H1 (cell line): ENCODE measurements at regions of chr3 and their contacts with region 1.

Region 1: DNA sequence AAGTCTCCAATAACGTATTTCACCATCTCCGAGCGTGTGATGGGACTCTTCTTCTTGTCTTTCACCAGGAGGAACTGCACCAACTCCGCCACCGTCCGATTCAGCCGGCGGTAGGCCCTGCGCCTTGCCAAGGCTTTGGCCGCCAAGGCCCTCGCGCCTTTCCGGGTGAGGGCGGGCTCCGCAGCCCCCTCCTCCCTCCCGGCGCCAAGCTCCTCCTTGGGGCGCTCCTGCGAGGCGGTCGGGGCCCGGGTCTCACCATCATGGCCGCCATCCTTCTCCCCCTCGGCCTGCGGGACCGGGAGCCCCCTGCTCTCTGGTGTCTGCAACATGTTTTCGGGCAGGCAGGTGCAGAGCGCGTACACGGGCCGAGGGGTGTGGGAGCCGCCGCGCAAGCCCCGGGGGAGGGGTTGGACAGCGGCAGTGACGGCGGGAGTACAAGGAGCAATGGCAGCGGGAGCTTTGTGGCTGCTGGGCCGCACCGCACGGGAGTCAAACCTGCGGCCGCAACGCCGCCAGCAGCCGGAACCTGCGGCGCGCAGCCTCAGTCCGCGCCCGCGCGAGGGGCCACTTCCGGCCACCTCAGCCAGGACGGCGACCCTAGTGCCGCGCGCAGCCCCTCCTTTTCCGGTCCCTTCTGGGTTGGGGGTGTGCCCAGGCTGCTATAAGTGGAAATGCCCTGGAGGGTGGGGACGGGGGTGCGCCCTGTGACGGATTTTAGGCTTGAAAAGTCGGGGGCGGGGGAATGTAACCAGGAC is at the start of gene MAGEF1:
- DNase-seq: peak; percentile 67 to 89
- H3K4me3 ChIP-seq: peak within 1 kb of the TSS; percentile 86 to 98 (median 90)
- H3K27ac ChIP-seq: peak within 1 kb of the TSS; percentile 97
- H3K4me1 ChIP-seq: peaks cover 2 to 10% (median 4%) of the 10 kb centered on the region in 4 experiments; a peak in 6 of 7 replicates
- H3K27me3 ChIP-seq: no peaks in the 10 kb centered on the region
- CTCF ChIP-seq: no peak
- EP300 ChIP-seq: no peak; a peak in 1 of 3 replicates
- POLR2A ChIP-seq: peak; percentile 91
- RAD21 ChIP-seq: peak; percentile 7 to 18; a peak in 2 of 4 replicates
- total RNA-seq, gene MAGEF1: 54.1 and 56.7 TPM in 2 replicates

Region 2: GRCh38 chr3:184583578-184584425 is 127.9 kb before region 1 on chr3:
- CTCF ChIA-PET with region 1: no interaction called
- POLR2A ChIA-PET with region 1: interaction called, 11 read pairs
- DNase-seq: peak in 1 of 2 experiments; percentile 68
- H3K4me3 ChIP-seq: peak overlapping the region; percentile 51 to 71 (median 58)
- H3K27ac ChIP-seq: no peak overlapping the region
- H3K4me1 ChIP-seq: peaks cover 0 to 28% (median 20%) of the 10 kb centered on the region in 4 experiments; a peak in 6 of 7 replicates
- H3K27me3 ChIP-seq: peaks cover 8 to 63% (median 50%) of the 10 kb centered on the region in 4 experiments
- CTCF ChIP-seq: peak in 2 of 3 experiments; percentile 18 to 51; a peak in 2 of 4 replicates
- EP300 ChIP-seq: no peak
- POLR2A ChIP-seq: no peak
- RAD21 ChIP-seq: peak in 1 of 2 experiments; percentile 37; a peak in 1 of 4 replicates

Region 3: GRCh38 chr3:184679056-184679816 is 32.4 kb before region 1 on chr3:
- CTCF ChIA-PET with region 1: no interaction called
- POLR2A ChIA-PET with region 1: interaction called, 16 read pairs
- DNase-seq: peak in 1 of 2 experiments; percentile 74
- H3K4me3 ChIP-seq: peak overlapping the region in 3 of 4 experiments; percentile 10 to 40 (median 19); a peak in 4 of 8 replicates
- H3K27ac ChIP-seq: no peak overlapping the region
- H3K4me1 ChIP-seq: peaks cover 0 to 13% (median 9%) of the 10 kb centered on the region in 4 experiments; a peak in 6 of 7 replicates
- H3K27me3 ChIP-seq: 0 out of 7 replicates have a peak, but pooled peaks cover 0 to 4% (median 0%) of the 10 kb centered on the region in 4 experiments
- CTCF ChIP-seq: no peak
- EP300 ChIP-seq: no peak
- POLR2A ChIP-seq: peak in 1 of 2 experiments; percentile 24; a peak in 1 of 3 replicates
- RAD21 ChIP-seq: no peak

Region 4: GRCh38 chr3:184691397-184692231 is 20.1 kb before region 1 on chr3:
- CTCF ChIA-PET with region 1: interaction called, 8 read pairs
- POLR2A ChIA-PET with region 1: interaction called, 15 read pairs
- DNase-seq: no peak
- H3K4me3 ChIP-seq: no peak overlapping the region
- H3K27ac ChIP-seq: no peak overlapping the region
- H3K4me1 ChIP-seq: peaks cover 2 to 8% (median 4%) of the 10 kb centered on the region in 4 experiments; a peak in 4 of 7 replicates
- H3K27me3 ChIP-seq: peaks cover 0 to 3% (median 0%) of the 10 kb centered on the region in 4 experiments; a peak in 1 of 7 replicates
- CTCF ChIP-seq: no peak
- EP300 ChIP-seq: no peak
- POLR2A ChIP-seq: no peak
- RAD21 ChIP-seq: no peak

Region 5: GRCh38 chr3:184696697-184697096 is 15.0 kb before region 1 on chr3:
- CTCF ChIA-PET with region 1: interaction called, 8 read pairs
- POLR2A ChIA-PET with region 1: interaction called, 15 read pairs
- DNase-seq: no peak
- H3K4me3 ChIP-seq: no peak overlapping the region
- H3K27ac ChIP-seq: no peak overlapping the region
- H3K4me1 ChIP-seq: peaks cover 2 to 9% (median 4%) of the 10 kb centered on the region in 4 experiments; a peak in 4 of 7 replicates
- H3K27me3 ChIP-seq: peaks cover 0 to 3% (median 0%) of the 10 kb centered on the region in 4 experiments; a peak in 1 of 7 replicates
- CTCF ChIP-seq: no peak
- EP300 ChIP-seq: no peak
- POLR2A ChIP-seq: no peak
- RAD21 ChIP-seq: no peak

Region 6: GRCh38 chr3:184727357-184728009 is 15.8 kb after region 1 on chr3:
- CTCF ChIA-PET with region 1: interaction called, 11 read pairs
- POLR2A ChIA-PET with region 1: interaction called, 21 read pairs
- DNase-seq: peak; percentile 74 to 78
- H3K4me3 ChIP-seq: no peak overlapping the region
- H3K27ac ChIP-seq: no peak overlapping the region
- H3K4me1 ChIP-seq: no peaks in the 10 kb centered on the region; a peak in 1 of 7 replicates
- H3K27me3 ChIP-seq: peaks cover 0 to 3% (median 0%) of the 10 kb centered on the region in 4 experiments; a peak in 3 of 7 replicates
- CTCF ChIP-seq: peak; percentile 58 to 97 (median 95)
- EP300 ChIP-seq: no peak
- POLR2A ChIP-seq: no peak
- RAD21 ChIP-seq: peak; percentile 85 to 93

Region 7: GRCh38 chr3:184748219-184749135 is 36.8 kb after region 1 on chr3:
- CTCF ChIA-PET with region 1: interaction called, 5 read pairs
- POLR2A ChIA-PET with region 1: interaction called, 11 read pairs
- DNase-seq: no peak
- H3K4me3 ChIP-seq: no peak overlapping the region
- H3K27ac ChIP-seq: no peak overlapping the region
- H3K4me1 ChIP-seq: peaks cover 4 to 14% (median 5%) of the 10 kb centered on the region in 4 experiments; a peak in 5 of 7 replicates
- H3K27me3 ChIP-seq: peaks cover 0 to 4% (median 1%) of the 10 kb centered on the region in 4 experiments; a peak in 2 of 7 replicates
- CTCF ChIP-seq: peak; percentile 63 to 81 (median 69)
- EP300 ChIP-seq: no peak
- POLR2A ChIP-seq: no peak
- RAD21 ChIP-seq: peak; percentile 74 to 80